GM12878 (cell line): ENCODE measurements at regions of chr4 and their contacts with region 1.

Region 1: DNA sequence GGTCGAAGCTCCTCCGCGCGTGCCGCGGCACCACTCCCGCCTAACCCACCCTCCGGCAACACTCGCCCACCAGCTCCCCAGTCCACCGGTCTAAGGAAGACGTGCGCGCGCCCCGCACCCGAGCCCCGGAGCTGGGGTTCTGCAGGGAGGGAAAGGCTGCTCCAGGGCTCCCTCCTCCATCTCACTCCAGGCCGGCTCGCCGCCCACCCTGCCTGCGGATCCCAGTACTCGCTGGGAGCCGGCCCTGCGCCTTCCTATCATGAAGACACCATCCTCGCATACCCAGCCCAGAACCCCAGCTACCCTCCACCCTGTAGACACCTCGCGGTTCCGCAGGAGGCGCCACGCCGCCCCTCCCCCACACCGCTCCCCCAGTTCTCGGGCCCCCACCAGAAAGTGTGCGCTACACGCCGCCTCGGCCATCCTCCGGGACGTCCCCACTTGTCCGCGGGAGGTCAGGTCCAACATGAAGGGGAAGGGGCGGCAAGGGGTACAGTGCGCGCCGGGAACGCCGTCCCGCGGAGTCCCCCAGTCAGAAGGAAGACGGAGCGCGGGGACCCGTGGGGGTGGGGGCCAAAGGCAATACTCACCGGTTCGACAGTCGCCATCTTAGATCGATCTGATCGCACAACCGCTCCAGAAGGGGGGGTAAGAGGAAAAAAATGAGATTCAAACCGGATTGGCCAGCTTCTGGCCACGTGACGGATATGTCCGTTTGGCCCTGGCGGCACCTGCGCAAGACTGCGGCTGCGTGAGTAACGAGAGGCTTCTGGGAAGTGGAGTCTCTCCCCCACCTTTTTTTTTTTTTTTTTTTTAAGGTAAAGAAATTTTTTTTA is at the start of gene EIF4E:
- DNase-seq: peak; percentile 96
- ATAC-seq: peak; percentile 82
- H3K4me3 ChIP-seq: peak within 1 kb of the TSS; percentile 95
- H3K27ac ChIP-seq: peak within 1 kb of the TSS; percentile 96
- H3K4me1 ChIP-seq: peaks cover 8% of the 10 kb centered on the region
- H3K27me3 ChIP-seq: no peaks in the 10 kb centered on the region
- CTCF ChIP-seq: peak; percentile 20 to 38 (median 27); a peak in 5 of 6 replicates
- EP300 ChIP-seq: 0 out of 4 replicates have a peak, but pooled peaks of 1 of the 2 experiments have one; percentile 10
- POLR2A ChIP-seq: peak; percentile 91
- RAD21 ChIP-seq: no peak
- polyA plus RNA-seq, gene EIF4E: 167 to 372 TPM

Region 2: DNA sequence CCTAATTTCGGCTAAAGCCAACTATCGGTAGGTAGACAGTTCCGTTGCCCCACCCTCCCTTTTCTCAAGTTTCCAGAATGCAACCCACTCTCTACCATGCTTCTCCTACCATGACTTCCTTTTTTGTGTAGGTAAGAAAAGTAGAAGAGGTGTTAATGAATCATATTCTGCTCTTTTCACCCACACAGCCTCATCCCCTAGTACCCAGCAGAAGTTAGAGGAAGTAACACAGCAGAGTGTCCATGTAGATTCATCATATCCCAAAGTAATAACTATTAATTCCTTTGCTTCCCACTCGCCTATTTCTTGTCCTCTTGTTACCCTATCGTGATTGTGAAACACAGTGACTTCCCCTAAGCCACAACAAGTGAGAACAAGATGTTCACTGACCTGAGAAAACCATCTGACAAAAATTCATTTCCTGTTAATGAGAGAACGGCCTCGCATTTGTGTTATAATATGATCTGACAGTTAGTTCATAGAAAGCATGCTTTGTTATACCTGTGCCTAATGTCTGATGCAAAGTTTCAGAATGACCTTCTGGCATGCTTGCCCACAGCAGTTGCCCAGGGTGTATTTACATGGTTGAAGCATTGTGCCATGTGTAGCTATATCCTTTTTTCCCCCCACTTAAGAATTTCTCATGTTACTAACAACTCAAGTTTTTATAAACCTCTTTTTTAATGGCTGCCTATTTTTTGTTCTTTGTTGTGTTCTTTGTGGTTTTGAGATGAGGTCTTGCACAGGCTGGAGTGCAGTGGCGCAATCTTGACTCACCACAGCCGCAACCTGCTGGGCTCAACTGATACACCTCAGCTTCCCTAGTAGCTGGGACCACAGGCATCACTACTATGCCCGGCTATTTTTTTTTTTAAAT is 482.0 kb before region 1 on chr4:
- CTCF ChIA-PET with region 1: no interaction called
- POLR2A ChIA-PET with region 1: no interaction called
- RAD21 ChIA-PET with region 1: no interaction called
- SMC1A ChIA-PET with region 1: interaction called, 4 read pairs
- in situ Hi-C with region 1: no loop called
- intact Hi-C with region 1: loop called (anchors 1 kb)
- DNase-seq: peak; percentile 61
- ATAC-seq: peak; percentile 93
- H3K4me3 ChIP-seq: no peak overlapping the region
- H3K27ac ChIP-seq: peak overlapping the region; percentile 36
- H3K4me1 ChIP-seq: peaks cover 17% of the 10 kb centered on the region
- H3K27me3 ChIP-seq: no peaks in the 10 kb centered on the region
- CTCF ChIP-seq: no peak
- EP300 ChIP-seq: peak in 1 of 2 experiments; percentile 68; a peak in 2 of 4 replicates
- POLR2A ChIP-seq: no peak
- RAD21 ChIP-seq: no peak

Region 3: GRCh38 chr4:98658287-98659105 is 270.2 kb before region 1 on chr4 and contains the start of gene TSPAN5:
- CTCF ChIA-PET with region 1: no interaction called
- POLR2A ChIA-PET with region 1: no interaction called
- RAD21 ChIA-PET with region 1: no interaction called
- SMC1A ChIA-PET with region 1: no interaction called
- in situ Hi-C with region 1: no loop called
- intact Hi-C with region 1: loop called (anchors 5 kb)
- DNase-seq: no peak
- ATAC-seq: peak; percentile 84
- H3K4me3 ChIP-seq: peak within 1 kb of the TSS; percentile 65
- H3K27ac ChIP-seq: no peak within 1 kb of the TSS
- H3K4me1 ChIP-seq: peaks cover 10% of the 10 kb centered on the region
- H3K27me3 ChIP-seq: peaks cover 4 to 23% of the 10 kb centered on the region in 2 experiments
- CTCF ChIP-seq: no peak
- EP300 ChIP-seq: no peak
- POLR2A ChIP-seq: peak; percentile 33; the same call in 1 of the 2 replicates
- RAD21 ChIP-seq: no peak
- polyA plus RNA-seq, gene TSPAN5: 0.22 to 0.23 TPM

Region 4: DNA sequence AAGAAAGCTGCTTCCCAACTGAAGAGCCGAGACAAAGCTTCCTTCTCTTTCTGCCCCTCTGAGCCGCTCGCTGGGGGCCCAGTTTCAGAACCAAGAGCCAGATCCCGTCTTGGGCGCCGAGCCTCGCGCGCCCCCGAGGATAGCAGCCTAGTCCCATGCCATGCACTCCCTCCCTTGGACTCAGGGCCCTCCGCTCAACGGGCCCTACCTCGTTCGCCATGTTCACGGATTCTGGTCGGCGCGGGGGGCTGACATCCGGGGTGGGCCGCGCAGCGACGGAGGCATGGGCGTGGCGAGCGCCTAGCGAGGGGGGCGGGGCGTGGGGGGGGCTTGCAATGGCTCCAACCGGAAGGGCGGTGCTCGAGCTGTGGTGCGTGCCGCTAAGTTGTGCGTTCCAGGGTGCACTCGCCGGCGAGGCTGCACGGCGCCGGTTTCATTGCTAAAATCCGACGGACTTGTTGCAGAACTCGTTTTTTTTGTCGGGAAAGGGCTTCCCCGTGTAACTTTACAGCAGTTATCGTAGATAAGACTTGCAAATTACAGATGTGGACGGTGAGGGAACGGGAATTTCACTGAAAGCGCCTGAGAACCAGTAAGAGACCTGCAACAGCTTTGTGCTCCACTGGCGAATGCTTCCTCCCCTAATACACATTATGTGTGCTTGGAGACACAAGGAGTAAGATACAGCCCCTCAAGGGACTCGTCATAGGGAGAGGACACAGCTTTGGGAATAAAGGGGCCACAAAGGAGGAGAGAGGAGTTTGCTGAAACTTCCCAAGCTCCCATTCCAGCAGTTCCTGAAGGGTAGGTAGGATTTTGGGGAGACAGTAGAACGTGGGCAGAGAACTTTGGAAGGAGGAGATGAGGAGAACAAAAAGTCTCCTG is 160.0 kb after region 1 on chr4 and contains the start of gene ADH5:
- CTCF ChIA-PET with region 1: interaction called, 3 read pairs
- POLR2A ChIA-PET with region 1: interaction called, 11 read pairs
- RAD21 ChIA-PET with region 1: no interaction called
- SMC1A ChIA-PET with region 1: no interaction called
- in situ Hi-C with region 1: no loop called
- intact Hi-C with region 1: no loop called
- DNase-seq: peak; percentile 51
- ATAC-seq: peak; percentile 95
- H3K4me3 ChIP-seq: peak within 1 kb of the TSS; percentile 90
- H3K27ac ChIP-seq: peak within 1 kb of the TSS; percentile 76
- H3K4me1 ChIP-seq: no peaks in the 10 kb centered on the region
- H3K27me3 ChIP-seq: no peaks in the 10 kb centered on the region
- CTCF ChIP-seq: no peak
- EP300 ChIP-seq: no peak
- POLR2A ChIP-seq: peak; percentile 96
- RAD21 ChIP-seq: no peak
- polyA plus RNA-seq, gene ADH5: 96.3 to 134 TPM

Region 5: DNA sequence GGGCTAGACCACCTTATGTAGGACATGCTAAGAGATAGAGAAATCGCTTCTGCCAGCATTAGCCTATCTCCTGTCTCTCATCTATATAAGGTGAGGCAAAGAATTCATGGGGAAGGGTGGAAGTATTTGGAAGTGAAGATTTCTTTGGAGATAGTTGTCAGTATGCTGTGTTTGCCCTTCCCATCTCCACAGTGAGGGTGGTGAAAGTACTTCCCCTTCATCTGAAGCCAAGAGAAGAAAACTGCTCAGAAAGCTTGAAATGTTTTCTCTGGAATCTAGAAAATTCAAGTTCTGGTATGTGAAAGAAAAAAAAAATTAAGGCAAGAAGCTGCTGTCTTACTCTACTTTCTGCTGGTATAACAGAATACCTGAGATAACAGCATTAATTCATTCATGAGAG is 172.2 kb after region 1 on chr4:
- CTCF ChIA-PET with region 1: no interaction called
- POLR2A ChIA-PET with region 1: interaction called, 11 read pairs
- RAD21 ChIA-PET with region 1: no interaction called
- SMC1A ChIA-PET with region 1: no interaction called
- in situ Hi-C with region 1: no loop called
- intact Hi-C with region 1: no loop called
- DNase-seq: no peak
- ATAC-seq: no peak
- H3K4me3 ChIP-seq: no peak overlapping the region
- H3K27ac ChIP-seq: no peak overlapping the region
- H3K4me1 ChIP-seq: no peaks in the 10 kb centered on the region
- H3K27me3 ChIP-seq: no peaks in the 10 kb centered on the region
- CTCF ChIP-seq: no peak
- EP300 ChIP-seq: no peak
- POLR2A ChIP-seq: no peak
- RAD21 ChIP-seq: no peak

Region 6: DNA sequence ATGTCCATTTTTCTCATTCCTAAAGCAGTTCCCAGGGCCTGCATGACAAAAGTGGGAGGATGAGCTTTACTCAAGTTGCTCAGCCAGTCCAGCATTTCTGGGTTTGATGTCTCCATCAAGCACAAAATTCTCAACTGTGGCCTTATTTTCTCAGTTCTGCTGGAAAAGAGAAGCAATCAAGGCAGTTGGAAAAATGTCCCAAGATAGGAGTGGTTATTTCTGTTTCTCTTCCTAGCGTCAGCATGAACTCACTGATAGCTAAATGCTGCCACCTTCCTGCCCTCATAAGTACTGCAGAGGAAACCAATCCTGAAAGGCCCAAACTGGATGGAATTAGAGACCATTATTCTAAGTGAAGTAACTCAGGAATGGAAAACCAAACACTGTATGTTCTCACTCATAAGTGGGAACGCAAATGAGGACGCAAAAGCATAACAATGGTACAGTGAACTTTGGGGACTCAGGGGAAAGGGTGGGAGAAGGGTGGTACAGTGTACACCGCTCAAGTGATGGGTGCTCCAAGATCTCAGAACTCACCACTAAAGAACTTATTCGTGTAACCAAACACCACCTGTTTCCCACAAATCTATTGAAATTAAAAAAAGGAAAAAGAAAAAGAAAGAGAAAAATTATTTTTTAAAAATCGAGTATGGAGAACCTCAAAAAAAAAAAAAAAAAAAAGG is 476.9 kb after region 1 on chr4:
- CTCF ChIA-PET with region 1: interaction called, 7 read pairs
- POLR2A ChIA-PET with region 1: interaction called, 3 read pairs
- RAD21 ChIA-PET with region 1: no interaction called
- SMC1A ChIA-PET with region 1: interaction called, 4 read pairs
- in situ Hi-C with region 1: no loop called
- intact Hi-C with region 1: loop called (anchors 2 kb)
- DNase-seq: peak; percentile 38
- ATAC-seq: peak; percentile 40
- H3K4me3 ChIP-seq: no peak overlapping the region
- H3K27ac ChIP-seq: peak overlapping the region; percentile 28; the same call in 1 of the 2 replicates
- H3K4me1 ChIP-seq: peaks cover 16% of the 10 kb centered on the region
- H3K27me3 ChIP-seq: no peaks in the 10 kb centered on the region
- CTCF ChIP-seq: peak; percentile 86 to 90 (median 87)
- EP300 ChIP-seq: no peak
- POLR2A ChIP-seq: no peak
- RAD21 ChIP-seq: peak; percentile 97

Region 7: GRCh38 chr4:99821918-99822503 is 893.3 kb after region 1 on chr4:
- CTCF ChIA-PET with region 1: no interaction called
- POLR2A ChIA-PET with region 1: no interaction called
- RAD21 ChIA-PET with region 1: no interaction called
- SMC1A ChIA-PET with region 1: no interaction called
- in situ Hi-C with region 1: no loop called
- intact Hi-C with region 1: loop called (anchors 10 kb)
- DNase-seq: peak; percentile 59
- ATAC-seq: peak; percentile 73
- H3K4me3 ChIP-seq: peak overlapping the region; percentile 59; the same call in 1 of the 2 replicates
- H3K27ac ChIP-seq: peak overlapping the region; percentile 70
- H3K4me1 ChIP-seq: peaks cover 17% of the 10 kb centered on the region; the same call in 1 of the 2 replicates
- H3K27me3 ChIP-seq: no peaks in the 10 kb centered on the region
- CTCF ChIP-seq: no peak
- EP300 ChIP-seq: no peak
- POLR2A ChIP-seq: no peak
- RAD21 ChIP-seq: no peak